GM12878 (cell line): ENCODE measurements at regions of chr15 and their contacts with region 1.

Region 1: GRCh38 chr15:92808978-92809879 is 90.9 kb upstream of the CHD2 start:
- DNase-seq: peak; percentile 94
- ATAC-seq: peak; percentile 87
- H3K4me3 ChIP-seq: peak overlapping the region; percentile 79
- H3K27ac ChIP-seq: peak overlapping the region; percentile 100
- H3K4me1 ChIP-seq: peaks cover 2% of the 10 kb centered on the region
- H3K27me3 ChIP-seq: no peaks in the 10 kb centered on the region
- CTCF ChIP-seq: peak; percentile 75 to 99 (median 90); a peak in 5 of 6 replicates
- EP300 ChIP-seq: peak in 1 of 2 experiments; percentile 52; a peak in 2 of 4 replicates
- POLR2A ChIP-seq: peak; percentile 92
- RAD21 ChIP-seq: peak; percentile 61

Region 2: DNA sequence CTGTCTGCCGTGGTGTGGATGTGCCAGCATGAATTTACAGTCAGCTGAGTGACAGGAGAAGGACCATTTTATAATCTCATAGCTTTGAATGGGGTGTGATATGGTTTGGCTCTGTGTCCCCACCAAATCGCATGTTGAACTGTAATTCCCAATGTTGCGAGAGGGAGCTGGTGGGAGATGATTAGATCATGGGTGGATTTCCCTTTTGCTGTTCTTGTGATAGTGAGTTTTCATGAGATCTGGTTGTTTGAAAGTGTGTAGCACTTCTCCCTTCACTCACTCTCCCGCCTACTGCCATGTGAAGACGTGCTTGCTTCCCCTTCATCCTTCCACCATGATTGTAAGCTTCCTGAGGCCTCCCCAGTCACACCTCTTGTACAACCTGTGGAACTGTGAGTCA is 21.0 kb before region 1 on chr15:
- CTCF ChIA-PET with region 1: no interaction called
- POLR2A ChIA-PET with region 1: no interaction called
- RAD21 ChIA-PET with region 1: no interaction called
- SMC1A ChIA-PET with region 1: no interaction called
- in situ Hi-C with region 1: no loop called
- intact Hi-C with region 1: no loop called
- DNase-seq: no peak
- ATAC-seq: no peak
- H3K4me3 ChIP-seq: no peak overlapping the region
- H3K27ac ChIP-seq: no peak overlapping the region
- H3K4me1 ChIP-seq: no peaks in the 10 kb centered on the region
- H3K27me3 ChIP-seq: no peaks in the 10 kb centered on the region; a peak in 1 of 4 replicates
- CTCF ChIP-seq: no peak
- EP300 ChIP-seq: no peak
- POLR2A ChIP-seq: no peak
- RAD21 ChIP-seq: no peak

Region 3: DNA sequence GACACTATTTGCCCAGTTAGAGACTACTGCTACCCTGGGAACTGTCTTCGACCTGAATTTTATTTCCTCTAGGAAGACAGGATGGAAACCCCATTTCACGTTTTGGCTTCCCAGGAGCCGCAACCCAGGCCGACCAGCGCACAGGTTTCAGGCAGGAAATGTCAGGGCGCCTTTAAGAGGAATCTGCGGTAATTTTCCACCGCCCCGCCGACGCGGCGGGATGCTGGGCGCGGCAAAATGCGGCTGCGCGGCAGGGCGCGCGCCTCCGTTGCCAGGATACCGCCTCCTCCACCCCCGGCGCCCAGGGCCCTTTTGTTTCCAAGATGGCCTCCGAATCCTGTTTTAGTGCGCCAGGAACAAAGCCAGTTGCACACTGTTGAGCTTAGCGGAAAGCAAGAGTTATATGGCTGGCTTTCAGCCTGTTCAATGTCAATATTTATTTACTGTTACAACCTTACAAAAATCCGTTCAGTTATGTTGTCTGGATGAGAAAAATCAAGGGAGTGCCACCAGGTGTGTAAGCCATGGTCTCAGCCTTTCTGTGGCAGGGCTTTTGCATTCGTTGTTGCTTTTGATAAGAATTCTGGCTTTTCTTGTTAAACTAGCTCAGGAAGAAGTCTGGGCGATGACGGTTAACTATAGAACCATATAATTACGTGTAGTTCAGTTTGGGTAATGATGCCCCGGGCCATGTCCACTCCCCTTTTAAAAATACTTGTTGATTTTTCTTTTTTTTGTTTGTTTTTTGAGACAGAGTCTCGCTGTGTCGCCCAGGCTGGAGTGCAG is 11.2 kb after region 1 on chr15:
- CTCF ChIA-PET with region 1: interaction called, 10 read pairs
- POLR2A ChIA-PET with region 1: interaction called, 26 read pairs
- RAD21 ChIA-PET with region 1: interaction called, 52 read pairs
- SMC1A ChIA-PET with region 1: interaction called, 70 read pairs
- in situ Hi-C with region 1: no loop called
- intact Hi-C with region 1: no loop called
- DNase-seq: no peak
- ATAC-seq: peak; percentile 94
- H3K4me3 ChIP-seq: peak overlapping the region; percentile 64
- H3K27ac ChIP-seq: peak overlapping the region; percentile 85
- H3K4me1 ChIP-seq: peaks cover 28% of the 10 kb centered on the region
- H3K27me3 ChIP-seq: no peaks in the 10 kb centered on the region
- CTCF ChIP-seq: no peak
- EP300 ChIP-seq: no peak
- POLR2A ChIP-seq: peak; percentile 59; the same call in 1 of the 2 replicates
- RAD21 ChIP-seq: no peak

Region 4: GRCh38 chr15:92889390-92890107 is 80.3 kb after region 1 on chr15:
- CTCF ChIA-PET with region 1: interaction called, 10 read pairs
- POLR2A ChIA-PET with region 1: interaction called, 117 read pairs
- RAD21 ChIA-PET with region 1: interaction called, 174 read pairs
- SMC1A ChIA-PET with region 1: interaction called, 25 read pairs
- in situ Hi-C with region 1: loop called (anchors 10 kb)
- intact Hi-C with region 1: no loop called
- DNase-seq: no peak
- ATAC-seq: peak; percentile 30
- H3K4me3 ChIP-seq: peak overlapping the region; percentile 13; the same call in 1 of the 2 replicates
- H3K27ac ChIP-seq: no peak overlapping the region
- H3K4me1 ChIP-seq: peaks cover 3% of the 10 kb centered on the region; the same call in 1 of the 2 replicates
- H3K27me3 ChIP-seq: no peaks in the 10 kb centered on the region
- CTCF ChIP-seq: no peak
- EP300 ChIP-seq: no peak
- POLR2A ChIP-seq: no peak
- RAD21 ChIP-seq: no peak

Region 5: GRCh38 chr15:92896561-92896960 is 87.3 kb after region 1 on chr15:
- CTCF ChIA-PET with region 1: interaction called, 8 read pairs
- POLR2A ChIA-PET with region 1: interaction called, 157 read pairs
- RAD21 ChIA-PET with region 1: interaction called, 91 read pairs
- SMC1A ChIA-PET with region 1: interaction called, 135 read pairs
- in situ Hi-C with region 1: no loop called
- intact Hi-C with region 1: no loop called
- DNase-seq: no peak
- ATAC-seq: no peak
- H3K4me3 ChIP-seq: no peak overlapping the region
- H3K27ac ChIP-seq: no peak overlapping the region
- H3K4me1 ChIP-seq: no peaks in the 10 kb centered on the region
- H3K27me3 ChIP-seq: no peaks in the 10 kb centered on the region
- CTCF ChIP-seq: no peak
- EP300 ChIP-seq: no peak
- POLR2A ChIP-seq: no peak
- RAD21 ChIP-seq: no peak

Region 6: DNA sequence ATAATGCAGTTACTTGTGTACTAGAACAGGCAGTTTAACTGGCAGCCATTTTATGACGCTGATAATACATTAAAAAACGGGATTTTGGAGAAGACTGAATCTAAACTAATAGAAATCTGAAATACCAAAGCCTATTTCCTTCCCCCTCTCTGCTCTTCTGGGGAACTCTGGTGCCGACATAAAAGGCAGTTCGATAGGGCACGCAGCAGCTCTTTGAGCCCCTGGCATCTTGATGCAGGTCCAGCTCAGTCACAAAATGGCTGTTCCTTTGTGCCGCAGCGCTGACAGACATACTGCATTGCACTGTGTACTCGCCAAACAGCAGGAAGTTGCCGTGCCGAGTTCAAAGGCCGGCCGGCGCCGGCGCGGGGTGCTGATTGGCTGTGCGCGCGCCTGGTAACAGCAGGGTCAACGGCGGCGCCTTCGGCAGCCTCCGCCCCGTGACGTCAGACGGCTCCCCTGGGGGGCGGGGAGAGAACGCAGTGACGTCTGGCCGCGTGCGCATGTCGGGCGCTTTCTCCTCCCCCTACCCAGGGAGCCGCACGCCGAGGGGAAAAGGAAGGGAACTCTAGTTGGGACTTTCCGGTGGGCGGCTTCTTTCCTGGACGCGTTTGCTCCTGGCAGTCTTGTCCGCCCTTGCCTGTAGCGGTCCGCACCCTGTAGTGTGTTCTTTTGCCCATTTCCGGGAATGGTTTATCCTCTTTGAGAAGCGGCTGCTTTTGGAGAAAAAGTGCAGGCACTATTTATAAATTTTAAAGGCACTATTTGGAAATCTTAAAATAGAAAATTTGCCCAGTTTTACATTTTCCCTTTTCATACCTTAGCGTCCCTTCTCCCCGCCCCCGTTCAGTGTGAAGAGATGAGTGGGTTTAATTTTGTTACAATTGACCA is 95.0 kb after region 1 on chr15:
- CTCF ChIA-PET with region 1: interaction called, 36 read pairs
- POLR2A ChIA-PET with region 1: interaction called, 157 read pairs
- RAD21 ChIA-PET with region 1: interaction called, 91 read pairs
- SMC1A ChIA-PET with region 1: interaction called, 135 read pairs
- in situ Hi-C with region 1: no loop called
- intact Hi-C with region 1: loop called (anchors 1 kb)
- DNase-seq: peak; percentile 94
- ATAC-seq: peak; percentile 78
- H3K4me3 ChIP-seq: peak overlapping the region; percentile 95
- H3K27ac ChIP-seq: peak overlapping the region; percentile 98
- H3K4me1 ChIP-seq: peaks cover 13% of the 10 kb centered on the region
- H3K27me3 ChIP-seq: no peaks in the 10 kb centered on the region
- CTCF ChIP-seq: no peak
- EP300 ChIP-seq: peak in 1 of 2 experiments; percentile 49; a peak in 1 of 4 replicates
- POLR2A ChIP-seq: peak; percentile 93
- RAD21 ChIP-seq: no peak

Region 7: GRCh38 chr15:93288728-93289294 is 479.6 kb after region 1 on chr15:
- CTCF ChIA-PET with region 1: no interaction called
- POLR2A ChIA-PET with region 1: no interaction called
- RAD21 ChIA-PET with region 1: no interaction called
- SMC1A ChIA-PET with region 1: no interaction called
- in situ Hi-C with region 1: no loop called
- intact Hi-C with region 1: no loop called
- DNase-seq: no peak
- ATAC-seq: no peak
- H3K4me3 ChIP-seq: no peak overlapping the region
- H3K27ac ChIP-seq: no peak overlapping the region
- H3K4me1 ChIP-seq: no peaks in the 10 kb centered on the region
- H3K27me3 ChIP-seq: 0 out of 4 replicates have a peak, but pooled peaks cover 0 to 1% of the 10 kb centered on the region in 2 experiments
- CTCF ChIP-seq: no peak
- EP300 ChIP-seq: no peak
- POLR2A ChIP-seq: no peak
- RAD21 ChIP-seq: no peak